Activated naive CD8-positive, alpha-beta T cell treated with anti-CD3 and anti-CD28 coated beads, Interleukin-2, amount 10 ng/mL, durations not matched to agents 7 days and 5 days (primary cell): ENCODE measurements at regions of chr10 and their contacts with region 1.

Region 1: DNA sequence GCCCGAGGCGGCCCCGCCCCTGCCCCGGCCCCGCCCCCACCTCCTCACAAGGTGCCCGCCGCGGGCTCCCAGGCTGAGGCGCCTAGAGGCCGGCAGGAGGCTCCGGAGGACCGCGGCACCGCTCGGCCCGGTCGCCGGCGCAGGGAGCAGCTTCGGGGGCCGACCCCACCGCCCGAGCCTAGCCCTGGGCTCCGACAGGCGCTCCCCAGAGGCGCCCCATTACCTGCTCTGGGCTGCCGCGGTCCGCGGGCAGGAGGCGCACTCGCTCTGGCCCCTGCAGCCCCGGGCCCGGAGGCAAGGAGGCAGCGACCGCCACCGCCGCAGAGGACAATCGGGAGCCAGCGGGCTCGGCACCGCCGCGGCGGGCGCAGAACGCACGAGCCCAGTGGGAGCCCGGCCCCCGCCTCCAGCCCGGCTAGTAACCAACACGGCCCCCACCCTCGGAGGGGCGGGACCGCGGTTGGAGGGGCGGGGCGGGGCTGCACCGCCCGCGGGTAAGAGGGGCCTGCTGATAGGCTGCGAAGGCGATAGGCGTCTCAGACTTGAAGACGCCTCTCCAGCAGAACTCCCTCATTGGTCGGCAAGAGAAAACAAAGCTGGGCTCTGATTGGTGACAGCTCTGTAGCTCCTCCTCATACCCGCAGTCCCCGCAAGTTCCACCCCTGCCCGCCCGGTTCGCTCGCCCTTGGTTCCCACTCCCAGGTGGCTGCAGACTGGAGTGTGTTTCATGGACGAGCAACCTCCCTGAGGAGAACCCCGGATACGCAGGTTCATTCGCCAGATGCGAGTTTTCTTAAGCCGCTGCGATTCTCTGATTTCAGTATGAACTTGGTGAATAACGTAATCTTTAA is at the start of gene MPP7:
- DNase-seq: peak; percentile 97
- ATAC-seq: peak; percentile 97
- H3K4me3 Mint-ChIP-seq: peak within 1 kb of the TSS; percentile 91
- H3K27ac Mint-ChIP-seq: peak within 1 kb of the TSS; percentile 72
- H3K4me1 Mint-ChIP-seq: peaks cover 35% of the 10 kb centered on the region
- H3K27me3 Mint-ChIP-seq: peaks cover 16% of the 10 kb centered on the region
- total RNA-seq, gene MPP7: 23.4 to 24.2 TPM

Region 2: GRCh38 chr10:27779462-27780015 is 523.3 kb before region 1 on chr10:
- POLR2A ChIA-PET with region 1: no interaction called
- DNase-seq: no peak
- ATAC-seq: no peak
- H3K4me3 Mint-ChIP-seq: no peak overlapping the region
- H3K27ac Mint-ChIP-seq: no peak overlapping the region
- H3K4me1 Mint-ChIP-seq: no peaks in the 10 kb centered on the region
- H3K27me3 Mint-ChIP-seq: peaks cover 62% of the 10 kb centered on the region

Region 3: GRCh38 chr10:28263136-28263820 is 39.6 kb before region 1 on chr10:
- POLR2A ChIA-PET with region 1: no interaction called
- DNase-seq: no peak
- ATAC-seq: no peak
- H3K4me3 Mint-ChIP-seq: no peak overlapping the region
- H3K27ac Mint-ChIP-seq: no peak overlapping the region
- H3K4me1 Mint-ChIP-seq: peaks cover 11% of the 10 kb centered on the region
- H3K27me3 Mint-ChIP-seq: no peaks in the 10 kb centered on the region

Region 4: DNA sequence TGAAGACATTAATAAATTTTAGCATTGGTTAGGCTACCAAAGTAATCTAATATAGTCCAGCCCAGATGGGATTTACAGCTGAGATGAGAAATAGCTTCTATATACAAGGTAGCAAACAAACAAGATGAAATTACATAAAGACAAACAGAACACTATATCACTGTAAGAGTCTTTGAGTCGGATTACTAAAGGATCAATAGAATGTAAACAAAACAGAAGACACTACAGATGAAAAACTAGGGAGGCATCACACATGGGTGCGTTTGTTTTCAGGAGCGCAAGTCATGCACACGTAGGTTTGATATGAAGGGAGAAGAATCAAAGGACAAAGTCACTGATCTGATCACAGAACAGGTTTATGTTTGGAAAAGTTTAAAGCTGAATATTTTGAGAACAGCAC is 26.5 kb before region 1 on chr10:
- POLR2A ChIA-PET with region 1: no interaction called
- DNase-seq: no peak
- ATAC-seq: no peak
- H3K4me3 Mint-ChIP-seq: no peak overlapping the region
- H3K27ac Mint-ChIP-seq: no peak overlapping the region
- H3K4me1 Mint-ChIP-seq: peaks cover 5% of the 10 kb centered on the region
- H3K27me3 Mint-ChIP-seq: no peaks in the 10 kb centered on the region

Region 5: DNA sequence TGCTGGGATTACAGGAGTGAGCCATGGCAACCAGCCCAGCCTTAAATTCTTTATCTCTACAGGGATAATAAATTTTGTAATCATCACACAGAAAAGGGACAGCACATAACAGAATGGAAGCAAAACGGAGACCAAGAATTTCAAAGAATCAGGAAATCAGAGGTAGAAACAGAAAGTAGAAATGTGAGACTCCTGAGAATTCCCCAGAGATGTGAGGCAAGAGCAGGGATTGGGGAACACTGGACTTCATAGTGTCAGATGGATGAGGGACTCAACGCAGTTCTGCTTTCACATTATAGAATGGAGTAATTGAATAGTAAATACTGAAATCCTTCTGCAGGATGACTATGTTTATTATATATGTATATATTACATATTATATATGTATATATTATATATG is 52.5 kb after region 1 on chr10:
- POLR2A ChIA-PET with region 1: no interaction called
- DNase-seq: no peak
- ATAC-seq: no peak
- H3K4me3 Mint-ChIP-seq: no peak overlapping the region
- H3K27ac Mint-ChIP-seq: no peak overlapping the region
- H3K4me1 Mint-ChIP-seq: peaks cover 7% of the 10 kb centered on the region
- H3K27me3 Mint-ChIP-seq: no peaks in the 10 kb centered on the region

Region 6: DNA sequence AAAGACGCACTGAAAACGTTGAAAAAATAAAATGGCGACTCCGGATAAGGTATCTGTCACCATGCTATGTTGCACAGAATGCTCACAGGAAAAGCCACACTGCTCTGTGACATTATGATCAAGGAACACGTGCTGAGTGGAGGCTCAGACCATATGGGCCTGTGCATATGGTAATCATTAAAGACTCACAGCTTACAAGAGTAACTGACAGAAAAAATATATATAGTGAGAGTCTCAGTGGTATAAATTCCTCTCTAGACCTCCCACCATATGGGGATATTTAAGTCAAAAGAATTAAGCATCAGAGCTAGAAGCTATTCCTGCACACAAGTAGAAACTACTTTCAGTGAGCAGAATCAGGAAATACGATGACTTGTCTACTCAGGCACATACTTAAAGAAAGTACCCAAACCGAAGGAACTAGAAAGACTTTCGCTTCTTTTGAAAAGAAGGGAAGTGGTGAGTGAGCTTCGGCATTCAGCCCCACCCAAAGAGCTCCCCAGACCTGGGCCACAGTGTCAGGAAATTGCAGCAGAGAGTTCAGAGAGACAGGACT is 65.1 kb after region 1 on chr10:
- POLR2A ChIA-PET with region 1: interaction called, 28 read pairs
- DNase-seq: peak; percentile 51
- ATAC-seq: peak; percentile 94
- H3K4me3 Mint-ChIP-seq: peak overlapping the region; percentile 81
- H3K27ac Mint-ChIP-seq: peak overlapping the region; percentile 98
- H3K4me1 Mint-ChIP-seq: peaks cover 40% of the 10 kb centered on the region
- H3K27me3 Mint-ChIP-seq: no peaks in the 10 kb centered on the region

Region 7: GRCh38 chr10:28381903-28382347 is 79.1 kb after region 1 on chr10:
- POLR2A ChIA-PET with region 1: interaction called, 52 read pairs
- DNase-seq: peak; percentile 73
- ATAC-seq: peak; percentile 94
- H3K4me3 Mint-ChIP-seq: peak overlapping the region; percentile 17
- H3K27ac Mint-ChIP-seq: no peak overlapping the region
- H3K4me1 Mint-ChIP-seq: peaks cover 27% of the 10 kb centered on the region
- H3K27me3 Mint-ChIP-seq: peaks cover 8% of the 10 kb centered on the region